Sigmoid colon (tissue), 7 donors: ENCODE measurements at regions of chr4 and their contacts with region 1.

Region 1: GRCh38 chr4:176319704-176320339 is at the start of gene SPCS3:
- DNase-seq: peak; percentile 98
- H3K4me3 ChIP-seq: peak within 1 kb of the TSS; percentile 66 to 91 (median 78)
- H3K27ac ChIP-seq: peak within 1 kb of the TSS; percentile 94 to 99 (median 94)
- H3K4me1 ChIP-seq: peaks cover 0 to 46% (median 32%) of the 10 kb centered on the region in 4 donors
- H3K27me3 ChIP-seq: no peaks in the 10 kb centered on the region
- CTCF ChIP-seq: no peak
- EP300 ChIP-seq: peak in 1 of 4 donors; percentile 9
- POLR2A ChIP-seq: peak; percentile 51 to 75
- total RNA-seq, gene SPCS3: 80.9 to 119 (median 107) TPM

Region 2: DNA sequence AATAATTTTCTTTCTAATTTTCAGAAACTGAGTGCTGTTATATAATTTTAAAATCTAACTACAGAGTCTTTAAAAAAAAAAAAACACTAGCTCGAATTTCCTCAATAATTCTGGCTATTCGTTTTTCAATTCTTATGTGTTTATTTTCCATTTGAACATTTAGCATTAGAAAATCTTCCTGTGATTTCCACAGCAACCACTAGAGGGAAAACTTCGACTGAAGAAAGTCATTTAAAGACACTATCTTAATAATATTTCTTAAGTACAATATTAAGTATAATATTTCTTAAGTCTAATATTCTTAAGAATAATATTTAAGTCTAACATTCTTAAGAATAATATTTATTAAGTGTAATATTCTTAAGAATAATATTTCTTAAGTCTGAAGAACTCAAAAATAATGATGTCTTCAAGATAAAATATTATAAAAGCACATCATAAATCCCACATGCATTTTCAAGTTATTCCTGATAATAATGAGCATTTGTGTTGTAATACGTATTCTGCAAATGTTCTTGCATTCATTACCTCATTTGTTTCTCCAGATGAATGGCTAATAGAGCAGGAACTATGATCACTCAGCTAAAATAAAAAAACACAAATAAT is 372.6 kb before region 1 on chr4:
- intact Hi-C with region 1: loop called (anchors 10 kb)
- DNase-seq: no peak
- H3K4me3 ChIP-seq: peak overlapping the region in 1 of 4 donors; percentile 9
- H3K27ac ChIP-seq: no peak overlapping the region
- H3K4me1 ChIP-seq: peaks cover 0 to 13% (median 3%) of the 10 kb centered on the region in 4 donors
- H3K27me3 ChIP-seq: no peaks in the 10 kb centered on the region
- CTCF ChIP-seq: peak in 2 of 4 experiments; percentile 33 to 70
- EP300 ChIP-seq: no peak
- POLR2A ChIP-seq: no peak

Region 3: DNA sequence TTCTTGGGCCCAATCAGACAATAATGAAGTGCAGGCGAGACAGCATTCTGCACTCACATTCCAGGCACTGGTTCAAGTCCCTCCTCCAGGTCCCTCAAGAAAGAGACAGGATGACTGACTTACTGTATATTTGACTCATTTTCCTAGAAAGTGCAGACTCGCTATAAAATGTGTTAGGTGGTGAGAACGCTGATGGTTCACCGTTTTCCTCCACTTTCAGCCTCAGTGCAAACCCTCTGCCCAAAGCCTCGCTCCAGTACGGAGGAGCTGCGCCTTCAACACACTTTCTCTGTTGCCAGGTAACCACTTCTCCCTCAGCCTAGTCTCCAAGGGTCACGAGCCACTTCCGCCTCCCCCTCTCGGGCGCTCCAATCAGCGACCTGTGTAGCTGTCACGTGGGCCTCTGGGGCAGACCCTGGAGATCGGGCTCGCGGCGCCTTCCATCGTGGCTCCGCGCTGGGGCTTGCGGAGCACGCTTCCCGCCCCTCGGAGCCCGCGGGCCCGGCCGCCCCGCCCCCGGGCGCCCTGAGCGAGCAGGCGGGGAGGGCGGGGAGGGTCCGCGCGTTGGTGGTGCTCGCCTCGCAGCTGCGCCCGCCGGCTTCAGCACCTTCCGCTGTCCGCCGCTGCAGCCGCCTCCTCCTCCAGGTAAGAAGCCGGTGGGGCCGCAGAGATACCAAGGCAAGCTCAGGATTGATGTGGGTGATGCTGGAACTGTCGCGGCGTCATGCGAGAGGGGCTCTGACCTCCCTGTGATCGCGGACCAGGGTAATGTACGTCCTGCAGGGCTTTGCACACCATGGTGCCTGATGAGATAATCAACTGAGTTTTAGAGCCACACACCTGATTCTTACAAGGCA is 254.2 kb before region 1 on chr4 and contains the start of gene WDR17:
- intact Hi-C with region 1: loop called (anchors 2 kb)
- DNase-seq: peak; percentile 96
- H3K4me3 ChIP-seq: peak within 1 kb of the TSS; percentile 58 to 62 (median 60)
- H3K27ac ChIP-seq: peak within 1 kb of the TSS; percentile 53 to 68 (median 58)
- H3K4me1 ChIP-seq: peaks cover 0 to 14% (median 3%) of the 10 kb centered on the region in 4 donors
- H3K27me3 ChIP-seq: no peaks in the 10 kb centered on the region
- CTCF ChIP-seq: no peak
- EP300 ChIP-seq: no peak
- POLR2A ChIP-seq: no peak
- total RNA-seq, gene WDR17: 4.8 to 11.0 (median 6.8) TPM

Region 4: DNA sequence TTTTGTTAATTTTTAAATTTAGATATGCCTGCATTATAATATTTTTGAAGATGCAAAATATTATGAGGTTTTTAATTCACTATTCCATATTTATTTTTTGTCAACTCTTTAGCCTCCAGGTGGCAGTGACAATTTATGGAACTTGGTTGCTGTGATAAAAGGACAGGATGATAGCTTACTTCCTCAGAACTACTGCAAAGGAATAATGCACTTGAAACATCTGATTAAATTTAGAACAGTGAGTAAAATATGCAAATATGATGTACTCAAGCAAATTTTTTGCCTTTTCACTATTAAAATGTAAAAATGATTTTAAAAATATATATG is 169.5 kb before region 1 on chr4:
- intact Hi-C with region 1: loop called (anchors 5 kb)
- DNase-seq: no peak
- H3K4me3 ChIP-seq: no peak overlapping the region
- H3K27ac ChIP-seq: peak overlapping the region in 2 of 4 donors; percentile 34 to 60
- H3K4me1 ChIP-seq: peaks cover 0 to 27% (median 8%) of the 10 kb centered on the region in 4 donors
- H3K27me3 ChIP-seq: no peaks in the 10 kb centered on the region
- CTCF ChIP-seq: peak in 2 of 4 experiments; percentile 14 to 47
- EP300 ChIP-seq: no peak
- POLR2A ChIP-seq: no peak

Region 5: GRCh38 chr4:176195184-176195978 is 124.4 kb before region 1 on chr4 and contains the start of gene SPATA4:
- intact Hi-C with region 1: loop called (anchors 5 kb)
- DNase-seq: peak; percentile 97
- H3K4me3 ChIP-seq: peak within 1 kb of the TSS; percentile 44 to 68 (median 64)
- H3K27ac ChIP-seq: peak within 1 kb of the TSS; percentile 80 to 89 (median 84)
- H3K4me1 ChIP-seq: peaks cover 0 to 18% (median 13%) of the 10 kb centered on the region in 4 donors
- H3K27me3 ChIP-seq: no peaks in the 10 kb centered on the region
- CTCF ChIP-seq: no peak
- EP300 ChIP-seq: peak in 1 of 4 donors; percentile 29
- POLR2A ChIP-seq: peak; percentile 45 to 52
- total RNA-seq, gene SPATA4: 0.36 to 2.8 (median 0.54) TPM in 3 of 4 donors, not detected in the other

Region 6: DNA sequence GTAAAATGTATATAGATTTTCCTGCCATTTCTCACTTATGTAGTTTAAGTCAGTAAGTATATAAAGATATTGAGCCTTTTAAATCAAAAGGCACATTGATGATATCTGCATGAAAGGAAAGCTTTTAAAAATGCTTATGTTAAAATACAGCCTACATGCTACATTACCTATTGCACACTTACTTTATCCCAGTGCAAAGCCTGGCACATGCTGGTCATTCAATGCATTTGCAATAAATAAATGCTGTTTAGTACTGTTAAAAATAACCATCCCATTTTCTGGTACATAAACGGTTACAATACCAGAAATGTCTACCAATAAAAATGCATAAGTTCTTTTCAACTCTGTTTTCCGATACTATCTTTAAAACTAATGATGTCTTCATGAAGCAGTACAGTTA is 102.3 kb before region 1 on chr4:
- intact Hi-C with region 1: no loop called
- DNase-seq: no peak
- H3K4me3 ChIP-seq: no peak overlapping the region
- H3K27ac ChIP-seq: no peak overlapping the region
- H3K4me1 ChIP-seq: peaks cover 0 to 9% (median 2%) of the 10 kb centered on the region in 4 donors
- H3K27me3 ChIP-seq: no peaks in the 10 kb centered on the region
- CTCF ChIP-seq: no peak
- EP300 ChIP-seq: no peak
- POLR2A ChIP-seq: no peak

Region 7: DNA sequence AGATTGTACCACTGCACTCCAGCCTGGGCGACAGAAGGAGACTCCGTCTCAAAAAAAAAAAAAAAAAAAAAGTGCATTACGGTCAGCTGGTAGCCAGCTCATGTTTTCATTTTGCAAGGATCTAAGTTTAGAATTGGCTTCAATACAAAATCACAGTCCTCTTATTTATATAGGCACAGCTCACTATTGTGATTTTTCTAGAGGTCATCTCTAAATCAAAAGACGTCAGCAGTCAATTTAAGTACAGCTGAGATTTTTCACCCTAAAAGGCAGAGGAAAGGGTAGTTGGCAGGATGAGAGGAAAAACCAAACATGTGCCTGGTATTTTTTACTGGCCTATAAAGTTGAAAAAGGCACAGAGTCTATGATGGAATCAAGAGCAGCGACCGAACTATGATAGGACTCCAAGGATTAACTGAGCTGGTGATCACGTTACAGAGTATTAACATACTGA is 81.6 kb before region 1 on chr4:
- intact Hi-C with region 1: loop called (anchors 5 kb)
- DNase-seq: no peak
- H3K4me3 ChIP-seq: peak overlapping the region in 1 of 4 donors; percentile 9
- H3K27ac ChIP-seq: peak overlapping the region; percentile 83 to 90 (median 86)
- H3K4me1 ChIP-seq: peaks cover 0 to 65% (median 34%) of the 10 kb centered on the region in 4 donors
- H3K27me3 ChIP-seq: no peaks in the 10 kb centered on the region
- CTCF ChIP-seq: no peak
- EP300 ChIP-seq: peak; percentile 98 to 99 (median 98)
- POLR2A ChIP-seq: no peak